ENCODE measurements at regions of chr3 and their contacts with region 1.

Region 1: GRCh38 chr3:15205934-15206661 is at the start of gene CAPN7:
- DNase-seq: peak; percentile 85 to 99 (median 93)

Region 2: GRCh38 chr3:15098503-15099363 is 107.4 kb before region 1 on chr3 and contains the start of gene RBSN:
- intact Hi-C with region 1: loop called (anchors 1 kb)
- DNase-seq: peak; percentile 95 to 100 (median 96)

Region 3: GRCh38 chr3:15223685-15224572 is 17.8 kb after region 1 on chr3:
- intact Hi-C with region 1: no loop called
- DNase-seq: no peak

Region 4: GRCh38 chr3:15253023-15253697 is 47.1 kb after region 1 on chr3:
- intact Hi-C with region 1: loop called (anchors 5 kb)
- DNase-seq: no peak

Region 5: DNA sequence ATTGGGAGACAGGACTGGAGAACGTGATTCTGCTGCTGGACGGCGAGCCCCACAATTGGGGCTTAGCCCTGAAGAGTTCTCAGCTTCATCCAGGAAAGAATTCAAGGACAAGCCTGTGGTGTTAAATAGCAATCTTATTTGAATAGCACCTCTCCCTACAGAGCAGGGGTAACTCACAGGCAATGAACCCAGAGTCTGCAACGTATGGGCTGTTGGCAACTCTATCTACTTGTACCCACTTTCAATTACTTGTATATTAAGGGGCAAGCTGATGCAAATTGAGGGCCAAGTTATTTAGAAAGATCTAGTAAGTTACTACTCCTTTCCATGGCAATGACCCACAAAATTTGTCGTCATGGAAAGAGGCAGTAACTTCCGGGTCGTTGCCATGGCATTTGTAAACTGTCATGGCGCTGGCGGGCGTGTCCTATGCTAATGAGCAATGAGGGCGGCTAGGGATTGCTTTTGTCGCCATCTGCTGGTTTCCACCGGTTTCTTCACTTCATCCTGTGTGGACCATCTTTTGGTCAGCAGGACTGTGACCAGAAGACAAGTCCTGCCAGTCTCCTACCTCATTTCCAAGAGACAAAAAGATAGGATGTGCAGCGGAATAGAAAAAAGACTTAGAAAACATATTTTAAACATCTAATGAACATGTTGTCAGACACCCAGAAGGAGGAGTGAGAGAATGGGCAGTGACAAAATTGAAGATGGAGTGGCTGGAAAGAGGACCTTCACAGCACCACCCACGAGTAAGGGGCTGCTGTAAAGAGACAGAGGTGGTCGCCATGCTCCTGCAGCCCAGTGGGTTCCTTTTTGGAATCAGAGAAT is 172.1 kb after region 1 on chr3:
- intact Hi-C with region 1: loop called (anchors 2 kb)
- DNase-seq: peak; percentile 89 to 99 (median 96)

Region 6: DNA sequence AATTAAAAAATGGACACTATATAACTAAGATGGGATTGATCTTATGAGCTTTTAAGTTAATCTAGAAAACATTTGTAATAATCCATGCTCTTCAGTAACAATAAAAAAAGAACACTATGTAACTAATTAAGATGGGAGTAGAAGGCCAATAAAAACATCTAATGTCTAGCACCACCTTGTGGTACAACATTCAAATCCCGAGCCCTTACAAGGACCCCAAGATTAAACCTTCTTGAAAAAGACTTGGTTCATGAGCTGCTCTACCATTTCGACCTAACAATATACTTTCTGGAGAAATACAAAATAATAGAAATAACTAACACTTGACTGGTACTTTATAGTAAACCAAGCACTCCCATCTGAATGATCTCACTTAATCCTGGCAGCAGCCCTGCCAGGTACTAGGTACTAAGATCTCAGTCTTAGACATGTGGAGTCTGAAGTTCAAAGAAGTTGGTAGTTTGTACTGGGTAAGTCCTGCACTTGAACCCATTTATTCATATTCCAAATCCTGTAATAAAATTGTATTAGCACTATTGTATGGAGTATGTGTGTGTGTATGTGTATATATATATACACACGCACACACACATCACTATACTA is 199.5 kb after region 1 on chr3:
- intact Hi-C with region 1: loop called (anchors 2 kb)
- DNase-seq: no peak

Region 7: GRCh38 chr3:15557511-15557946 is 351.4 kb after region 1 on chr3:
- intact Hi-C with region 1: loop called (anchors 5 kb)
- DNase-seq: no peak

Region 8: GRCh38 chr3:15693355-15693754 is 487.3 kb after region 1 on chr3:
- intact Hi-C with region 1: no loop called
- DNase-seq: no peak

Measured in posterior cingulate gyrus (tissue), 11 donors.